ENCODE measurements at regions of chr9 and their contacts with region 1.

Region 1: GRCh38 chr9:29245351-29245750 is 1672.1 kb upstream of the C9orf72 start:
- DNase-seq: no peak
- ATAC-seq: no peak
- H3K4me3 ChIP-seq: no peak overlapping the region
- H3K27ac ChIP-seq: no peak overlapping the region
- H3K4me1 ChIP-seq: no peaks in the 10 kb centered on the region
- H3K27me3 ChIP-seq: no peaks in the 10 kb centered on the region
- CTCF ChIP-seq: no peak
- POLR2A ChIP-seq: no peak
- RAD21 ChIP-seq: no peak

Region 2: GRCh38 chr9:28453918-28454317 is 791.4 kb before region 1 on chr9:
- CTCF ChIA-PET with region 1: no interaction called
- POLR2A ChIA-PET with region 1: no interaction called
- dilution Hi-C with region 1: no loop called
- in situ Hi-C with region 1: no loop called
- intact Hi-C with region 1: loop called (anchors 5 kb)
- DNase-seq: no peak
- ATAC-seq: no peak
- H3K4me3 ChIP-seq: no peak overlapping the region
- H3K27ac ChIP-seq: no peak overlapping the region
- H3K4me1 ChIP-seq: no peaks in the 10 kb centered on the region
- H3K27me3 ChIP-seq: no peaks in the 10 kb centered on the region
- CTCF ChIP-seq: no peak
- POLR2A ChIP-seq: no peak
- RAD21 ChIP-seq: no peak

Region 3: DNA sequence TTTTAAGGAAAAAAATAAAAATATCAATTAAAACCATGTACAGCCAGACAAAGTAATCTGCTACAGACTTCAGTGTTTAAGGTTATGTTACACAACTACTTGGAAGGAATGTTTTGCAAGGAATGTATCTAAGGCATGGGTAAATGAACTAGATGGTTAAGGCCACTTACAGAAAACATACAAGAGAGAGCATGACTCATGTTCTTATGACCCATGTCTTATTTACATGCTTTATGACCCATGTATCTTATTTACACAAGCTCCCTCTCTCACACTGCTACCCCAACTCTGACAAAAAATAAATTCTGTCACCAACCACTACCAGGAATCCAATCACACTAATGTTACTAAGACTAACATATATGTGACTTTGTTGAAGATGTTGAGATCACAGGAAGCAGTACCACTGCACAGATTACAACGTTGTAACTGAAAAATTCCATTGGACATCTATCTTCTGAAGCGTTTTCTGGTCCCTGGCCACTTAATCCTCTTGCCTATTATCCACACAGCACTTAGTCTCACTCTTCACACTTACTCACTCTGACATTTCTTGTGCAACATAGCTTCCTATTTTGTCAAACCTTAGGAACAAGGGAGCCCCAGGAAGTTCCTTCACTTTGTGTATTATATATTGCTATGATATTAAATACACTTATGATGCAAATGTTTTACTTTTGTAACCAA is 42.0 kb before region 1 on chr9:
- CTCF ChIA-PET with region 1: no interaction called
- POLR2A ChIA-PET with region 1: no interaction called
- dilution Hi-C with region 1: no loop called
- in situ Hi-C with region 1: no loop called
- intact Hi-C with region 1: no loop called
- DNase-seq: no peak
- ATAC-seq: no peak
- H3K4me3 ChIP-seq: no peak overlapping the region
- H3K27ac ChIP-seq: no peak overlapping the region
- H3K4me1 ChIP-seq: no peaks in the 10 kb centered on the region
- H3K27me3 ChIP-seq: no peaks in the 10 kb centered on the region
- CTCF ChIP-seq: no peak
- POLR2A ChIP-seq: no peak
- RAD21 ChIP-seq: no peak

Region 4: GRCh38 chr9:29311221-29311620 is 65.9 kb after region 1 on chr9:
- CTCF ChIA-PET with region 1: no interaction called
- POLR2A ChIA-PET with region 1: no interaction called
- dilution Hi-C with region 1: no loop called
- in situ Hi-C with region 1: no loop called
- intact Hi-C with region 1: no loop called
- DNase-seq: no peak
- ATAC-seq: no peak
- H3K4me3 ChIP-seq: no peak overlapping the region
- H3K27ac ChIP-seq: no peak overlapping the region
- H3K4me1 ChIP-seq: no peaks in the 10 kb centered on the region
- H3K27me3 ChIP-seq: no peaks in the 10 kb centered on the region
- CTCF ChIP-seq: no peak
- POLR2A ChIP-seq: no peak
- RAD21 ChIP-seq: no peak